ENCODE measurements at regions of chr7 and their contacts with region 1.

Region 1: GRCh38 chr7:39453743-39454355 is 112.4 kb upstream of the YAE1 start:
- DNase-seq: peak; percentile 86
- H3K4me3 Mint-ChIP-seq: no peak overlapping the region
- H3K27ac Mint-ChIP-seq: no peak overlapping the region
- H3K4me1 Mint-ChIP-seq: no peaks in the 10 kb centered on the region
- H3K27me3 Mint-ChIP-seq: peaks cover 6% of the 10 kb centered on the region

Region 2: DNA sequence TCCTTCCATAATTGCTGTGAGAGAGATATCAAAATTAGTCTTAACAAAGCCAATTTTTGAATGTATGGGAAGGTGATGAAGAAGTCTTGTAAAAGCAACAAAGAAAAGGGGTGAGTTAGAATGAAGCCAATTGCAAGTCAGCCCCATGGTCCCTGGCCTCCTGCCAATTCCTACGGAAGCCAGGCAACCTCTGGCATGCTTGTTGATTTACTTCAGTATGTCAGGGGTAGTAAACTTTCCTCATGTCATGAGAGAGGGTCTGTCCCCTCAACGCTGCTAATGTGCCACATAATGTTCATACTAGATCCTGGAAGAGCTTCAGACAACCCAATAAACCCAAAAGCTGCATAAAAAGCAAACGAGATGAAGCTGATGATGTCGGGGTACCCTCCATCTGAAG is 46.7 kb before region 1 on chr7:
- intact Hi-C with region 1: no loop called
- DNase-seq: no peak
- H3K4me3 Mint-ChIP-seq: no peak overlapping the region
- H3K27ac Mint-ChIP-seq: no peak overlapping the region
- H3K4me1 Mint-ChIP-seq: no peaks in the 10 kb centered on the region
- H3K27me3 Mint-ChIP-seq: peaks cover 25% of the 10 kb centered on the region

Region 3: GRCh38 chr7:39510864-39511354 is 57.1 kb after region 1 on chr7:
- intact Hi-C with region 1: loop called (anchors 5 kb)
- DNase-seq: no peak
- H3K4me3 Mint-ChIP-seq: no peak overlapping the region
- H3K27ac Mint-ChIP-seq: peak overlapping the region; percentile 8
- H3K4me1 Mint-ChIP-seq: peaks cover 25% of the 10 kb centered on the region
- H3K27me3 Mint-ChIP-seq: peaks cover 8% of the 10 kb centered on the region

Region 4: DNA sequence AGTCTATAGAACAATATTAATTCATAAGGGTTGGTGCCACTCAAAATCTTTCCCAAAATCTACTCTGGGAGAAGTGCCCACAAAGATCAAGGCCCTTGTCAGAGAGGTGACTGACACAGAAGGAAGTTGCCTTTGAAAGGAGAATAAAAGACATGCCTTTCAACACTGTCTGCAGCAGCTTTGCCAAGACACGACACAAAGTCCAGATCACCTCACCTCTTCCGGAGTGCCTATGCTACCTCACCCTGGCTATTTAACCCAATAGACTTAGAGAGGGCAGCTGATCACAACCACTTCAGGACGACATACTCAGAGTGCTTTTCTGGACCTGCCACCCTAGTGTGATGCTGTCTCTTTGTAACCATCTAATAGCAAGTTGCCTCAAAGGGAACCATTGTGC is 63.4 kb after region 1 on chr7:
- intact Hi-C with region 1: loop called (anchors 1 kb)
- DNase-seq: no peak
- H3K4me3 Mint-ChIP-seq: no peak overlapping the region
- H3K27ac Mint-ChIP-seq: no peak overlapping the region
- H3K4me1 Mint-ChIP-seq: no peaks in the 10 kb centered on the region
- H3K27me3 Mint-ChIP-seq: peaks cover 13% of the 10 kb centered on the region

Region 5: GRCh38 chr7:39540320-39540719 is 86.5 kb after region 1 on chr7:
- intact Hi-C with region 1: no loop called
- DNase-seq: no peak
- H3K4me3 Mint-ChIP-seq: no peak overlapping the region
- H3K27ac Mint-ChIP-seq: no peak overlapping the region
- H3K4me1 Mint-ChIP-seq: no peaks in the 10 kb centered on the region
- H3K27me3 Mint-ChIP-seq: peaks cover 13% of the 10 kb centered on the region

Region 6: GRCh38 chr7:40134428-40135316 is 680.8 kb after region 1 on chr7 and contains the starts of genes MPLKIP and SUGCT:
- intact Hi-C with region 1: no loop called
- DNase-seq: peak; percentile 96
- H3K4me3 Mint-ChIP-seq: peak within 1 kb of the TSS; percentile 95
- H3K27ac Mint-ChIP-seq: peak within 1 kb of the TSS; percentile 94
- H3K4me1 Mint-ChIP-seq: peaks cover 11% of the 10 kb centered on the region
- H3K27me3 Mint-ChIP-seq: peaks cover 11% of the 10 kb centered on the region
- total RNA-seq, gene MPLKIP: 37.3 and 40.8 TPM in 2 replicates
- total RNA-seq, gene SUGCT: 0.91 and 1.0 TPM in 2 replicates